Activated CD4-positive, alpha-beta T cell treated with anti-CD3 and anti-CD28 coated beads for 36 hours (primary cell): ENCODE measurements at regions of chrX and their contacts with region 1.

Region 1: GRCh38 chrX:14029425-14030173 is at the start of gene GEMIN8:
- DNase-seq: peak; percentile 90
- ATAC-seq: peak; percentile 75
- H3K4me3 Mint-ChIP-seq: peak within 1 kb of the TSS; percentile 87
- H3K27ac Mint-ChIP-seq: peak within 1 kb of the TSS; percentile 100
- H3K4me1 Mint-ChIP-seq: peaks cover 40% of the 10 kb centered on the region
- H3K27me3 Mint-ChIP-seq: peaks cover 2% of the 10 kb centered on the region
- total RNA-seq, gene GEMIN8: 14.9 to 15.6 TPM

Region 2: GRCh38 chrX:13506574-13506973 is 523.0 kb before region 1 on chrX:
- CTCF ChIA-PET with region 1: interaction called, 18 read pairs
- POLR2A ChIA-PET with region 1: no interaction called
- intact Hi-C with region 1: loop called in 1 of 2 experiments (anchors 1 kb)
- DNase-seq: peak; percentile 71
- ATAC-seq: peak; percentile 19
- H3K4me3 Mint-ChIP-seq: no peak overlapping the region
- H3K27ac Mint-ChIP-seq: no peak overlapping the region
- H3K4me1 Mint-ChIP-seq: peaks cover 4% of the 10 kb centered on the region
- H3K27me3 Mint-ChIP-seq: no peaks in the 10 kb centered on the region

Region 3: GRCh38 chrX:13688958-13689740 is 340.4 kb before region 1 on chrX and contains the start of gene RAB9A:
- CTCF ChIA-PET with region 1: interaction called, 5 read pairs
- POLR2A ChIA-PET with region 1: no interaction called
- intact Hi-C with region 1: loop called in 1 of 2 experiments (anchors 1 kb)
- DNase-seq: peak; percentile 88
- ATAC-seq: peak; percentile 85
- H3K4me3 Mint-ChIP-seq: peak within 1 kb of the TSS; percentile 85
- H3K27ac Mint-ChIP-seq: peak within 1 kb of the TSS; percentile 97
- H3K4me1 Mint-ChIP-seq: peaks cover 63% of the 10 kb centered on the region
- H3K27me3 Mint-ChIP-seq: no peaks in the 10 kb centered on the region
- total RNA-seq, gene RAB9A: 24.9 to 31.4 TPM

Region 4: GRCh38 chrX:13750204-13750603 is 279.4 kb before region 1 on chrX:
- CTCF ChIA-PET with region 1: interaction called, 6 read pairs
- POLR2A ChIA-PET with region 1: no interaction called
- intact Hi-C with region 1: loop called (anchors 1 kb)
- DNase-seq: peak; percentile 10
- ATAC-seq: peak; percentile 65
- H3K4me3 Mint-ChIP-seq: no peak overlapping the region
- H3K27ac Mint-ChIP-seq: peak overlapping the region; percentile 25
- H3K4me1 Mint-ChIP-seq: peaks cover 18% of the 10 kb centered on the region
- H3K27me3 Mint-ChIP-seq: no peaks in the 10 kb centered on the region

Region 5: GRCh38 chrX:13797512-13797911 is 232.1 kb before region 1 on chrX:
- CTCF ChIA-PET with region 1: no interaction called
- POLR2A ChIA-PET with region 1: no interaction called
- intact Hi-C with region 1: no loop called
- DNase-seq: no peak
- ATAC-seq: no peak
- H3K4me3 Mint-ChIP-seq: no peak overlapping the region
- H3K27ac Mint-ChIP-seq: no peak overlapping the region
- H3K4me1 Mint-ChIP-seq: no peaks in the 10 kb centered on the region
- H3K27me3 Mint-ChIP-seq: peaks cover 2% of the 10 kb centered on the region

Region 6: DNA sequence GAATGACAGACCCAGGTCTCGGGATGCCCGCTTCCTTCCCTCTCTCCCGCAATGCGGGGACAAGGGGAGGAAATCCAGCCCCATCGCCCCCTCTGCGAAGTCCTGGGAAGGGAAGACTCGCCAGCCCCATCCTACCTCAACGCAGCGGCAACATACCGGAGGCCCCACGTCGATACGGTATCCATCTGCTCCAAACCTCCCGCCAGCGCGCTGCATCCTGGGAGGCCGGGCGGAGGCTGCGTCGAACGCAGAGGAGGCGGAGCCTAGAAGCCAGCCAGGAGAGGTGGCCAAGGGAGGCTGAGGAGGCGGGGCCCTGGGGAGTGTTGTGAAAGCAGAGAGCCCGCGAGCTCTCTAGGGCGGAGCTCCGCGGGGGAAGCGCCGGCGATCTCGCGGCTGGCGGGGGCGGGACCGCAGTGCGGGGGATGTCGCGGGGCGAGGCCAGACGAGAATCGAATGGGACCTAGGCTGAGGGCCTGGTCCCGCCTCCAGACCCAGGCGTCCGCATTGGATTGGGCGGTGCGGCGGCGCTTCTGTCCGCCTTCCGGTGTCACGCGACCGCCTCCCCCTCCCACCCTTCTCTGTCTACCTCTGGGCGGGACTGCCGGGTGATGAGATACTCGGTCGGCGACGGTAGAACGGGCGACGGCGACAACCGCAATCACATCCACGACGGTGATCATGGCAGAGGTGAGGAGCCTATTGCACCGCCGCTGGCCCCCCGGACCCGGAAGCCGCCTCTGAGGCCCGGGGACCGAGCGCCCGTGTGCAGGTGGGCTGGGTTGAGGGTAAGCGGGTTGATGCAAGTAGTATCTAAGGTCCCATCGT is 843.5 kb after region 1 on chrX and contains the starts of genes FANCB and MOSPD2:
- CTCF ChIA-PET with region 1: no interaction called
- POLR2A ChIA-PET with region 1: no interaction called
- intact Hi-C with region 1: loop called in 1 of 2 experiments (anchors 1 kb)
- DNase-seq: peak; percentile 95
- ATAC-seq: peak; percentile 96
- H3K4me3 Mint-ChIP-seq: peak within 1 kb of the TSS; percentile 78
- H3K27ac Mint-ChIP-seq: peak within 1 kb of the TSS; percentile 76
- H3K4me1 Mint-ChIP-seq: peaks cover 17% of the 10 kb centered on the region
- H3K27me3 Mint-ChIP-seq: no peaks in the 10 kb centered on the region
- total RNA-seq, gene FANCB: 14.7 to 15.4 TPM
- total RNA-seq, gene MOSPD2: 18.9 to 24.5 TPM